ENCODE measurements at regions of chr5 and their contacts with region 1.

Region 1: DNA sequence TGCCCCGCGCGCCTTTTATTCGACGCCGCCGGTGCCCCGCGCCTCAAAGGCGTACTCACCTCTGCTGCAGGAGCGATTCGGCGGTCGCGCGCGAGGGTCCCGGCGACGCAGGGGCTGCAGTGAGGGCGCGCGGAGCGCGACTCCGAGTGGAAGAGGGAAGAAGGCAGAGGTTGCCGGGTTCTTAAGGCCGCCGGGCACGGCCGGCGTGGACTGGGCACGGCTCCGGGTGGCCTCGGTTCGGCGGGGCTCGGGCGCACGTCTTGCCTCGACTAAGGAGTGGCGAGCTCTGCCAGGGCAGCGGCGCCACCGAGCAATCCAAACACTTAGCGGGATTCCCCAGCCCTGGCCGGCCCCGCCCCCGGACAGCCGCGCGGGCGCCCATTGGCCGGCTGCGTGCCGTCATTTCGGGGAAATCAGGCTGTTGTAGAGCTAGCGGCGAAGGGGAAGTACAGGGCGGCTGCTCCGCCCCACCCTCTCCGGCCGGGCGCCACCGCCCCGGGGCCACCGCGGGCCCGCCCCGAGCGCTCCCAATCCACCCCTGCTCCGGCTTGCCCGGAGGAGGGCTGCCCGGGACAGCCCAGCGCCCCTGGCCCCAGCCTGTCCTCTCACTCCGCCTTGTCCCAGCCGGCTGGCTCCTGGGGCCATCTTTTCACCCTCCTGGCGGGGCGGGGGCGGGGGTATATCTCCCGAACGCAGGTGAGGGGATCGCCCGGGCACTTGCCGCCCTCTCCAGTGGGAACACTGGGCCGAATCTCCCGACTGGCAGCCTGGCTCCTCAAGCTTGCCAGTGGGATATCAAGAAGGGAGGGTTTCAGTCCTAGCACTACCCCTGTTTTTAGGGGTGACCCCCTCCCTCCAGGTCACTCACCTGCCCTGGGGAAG is at the start of gene IRF1:
- DNase-seq: peak; percentile 97 to 100 (median 99)
- ATAC-seq: peak; percentile 89
- H3K4me3 ChIP-seq: peak within 1 kb of the TSS; percentile 78
- H3K4me3 Mint-ChIP-seq: peak within 1 kb of the TSS; percentile 92 to 98 (median 95)
- H3K27ac ChIP-seq: peak within 1 kb of the TSS; percentile 99
- H3K27ac Mint-ChIP-seq: peak within 1 kb of the TSS; percentile 93 to 99 (median 96)
- H3K4me1 ChIP-seq: peaks cover 59 to 65% of the 10 kb centered on the region in 2 donors
- H3K4me1 Mint-ChIP-seq: peaks cover 52 to 78% (median 71%) of the 10 kb centered on the region in 7 donors
- H3K27me3 ChIP-seq: no peaks in the 10 kb centered on the region
- H3K27me3 Mint-ChIP-seq: peaks cover 0 to 2% (median 0%) of the 10 kb centered on the region in 5 donors
- total RNA-seq, gene IRF1: 118 to 632 (median 549) TPM

Region 2: DNA sequence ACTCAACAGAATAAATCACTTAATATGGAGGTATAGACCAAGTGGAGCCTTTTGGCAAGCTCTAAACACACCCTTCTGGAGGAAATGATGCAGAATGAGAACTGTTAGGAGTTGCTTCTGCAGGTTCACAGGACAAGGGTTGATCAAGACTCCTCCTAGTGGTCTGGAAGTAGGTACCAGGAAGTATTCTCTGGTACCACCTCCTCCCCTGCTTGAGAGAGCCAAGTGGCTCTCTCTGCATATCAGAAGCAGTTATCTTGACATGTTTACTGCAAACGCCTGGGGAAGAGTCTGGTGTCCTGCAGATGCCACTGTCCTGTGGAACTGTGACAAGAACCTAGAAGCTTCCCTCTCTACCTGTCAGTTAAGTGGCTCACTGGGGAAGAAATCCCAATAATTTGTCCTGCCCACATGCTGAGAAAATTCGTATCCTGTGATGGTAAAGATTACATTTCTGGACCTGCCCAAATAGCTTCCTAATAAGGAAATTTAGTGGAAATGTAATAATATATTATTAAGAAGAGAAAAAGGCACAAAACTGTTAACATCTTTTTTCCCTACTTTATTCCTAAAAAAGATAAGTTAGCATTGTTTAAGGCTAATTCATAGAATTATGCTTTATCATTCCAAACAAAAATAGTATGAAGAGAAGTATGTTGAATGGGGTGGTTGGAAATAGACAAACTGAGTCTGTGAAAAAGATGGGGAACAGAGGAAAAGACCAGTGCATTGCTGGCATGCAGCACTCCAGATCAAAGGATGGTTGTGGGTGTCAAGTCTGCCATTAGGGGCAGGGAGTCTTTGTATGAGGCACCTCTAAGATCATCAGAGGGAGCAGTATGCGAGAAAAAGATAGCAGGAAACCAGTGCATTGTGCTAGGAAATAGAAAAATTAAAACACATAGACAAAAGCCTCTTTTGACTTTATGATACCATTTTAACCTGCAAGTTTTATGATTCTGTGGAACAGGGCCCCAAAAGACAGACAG is 1108.0 kb before region 1 on chr5:
- CTCF ChIA-PET with region 1: no interaction called
- POLR2A ChIA-PET with region 1: no interaction called
- intact Hi-C with region 1: loop called in 1 of 2 experiments (anchors 10 kb)
- DNase-seq: peak in 8 of 9 donors; percentile 43 to 88 (median 82)
- ATAC-seq: peak; percentile 81
- H3K4me3 ChIP-seq: no peak overlapping the region
- H3K4me3 Mint-ChIP-seq: peak overlapping the region; percentile 40 to 86 (median 72)
- H3K27ac ChIP-seq: peak overlapping the region; percentile 97
- H3K27ac Mint-ChIP-seq: peak overlapping the region; percentile 94 to 99 (median 98)
- H3K4me1 ChIP-seq: peaks cover 74 to 76% of the 10 kb centered on the region in 2 donors
- H3K4me1 Mint-ChIP-seq: peaks cover 41 to 100% (median 92%) of the 10 kb centered on the region in 7 donors
- H3K27me3 ChIP-seq: no peaks in the 10 kb centered on the region
- H3K27me3 Mint-ChIP-seq: no peaks in the 10 kb centered on the region

Region 3: GRCh38 chr5:132394667-132395259 is 96.0 kb before region 1 on chr5:
- CTCF ChIA-PET with region 1: interaction called, 243 read pairs
- POLR2A ChIA-PET with region 1: interaction called, 122 read pairs
- intact Hi-C with region 1: no loop called
- DNase-seq: no peak
- ATAC-seq: no peak
- H3K4me3 ChIP-seq: no peak overlapping the region
- H3K4me3 Mint-ChIP-seq: peak overlapping the region in 6 of 10 donors; percentile 6 to 73 (median 34)
- H3K27ac ChIP-seq: peak overlapping the region; percentile 35
- H3K27ac Mint-ChIP-seq: peak overlapping the region in 8 of 9 donors; percentile 68 to 94 (median 87)
- H3K4me1 ChIP-seq: peaks cover 19 to 65% of the 10 kb centered on the region in 2 donors
- H3K4me1 Mint-ChIP-seq: peaks cover 48 to 94% (median 82%) of the 10 kb centered on the region in 7 donors
- H3K27me3 ChIP-seq: no peaks in the 10 kb centered on the region
- H3K27me3 Mint-ChIP-seq: peaks cover 0 to 10% (median 0%) of the 10 kb centered on the region in 5 donors

Region 4: DNA sequence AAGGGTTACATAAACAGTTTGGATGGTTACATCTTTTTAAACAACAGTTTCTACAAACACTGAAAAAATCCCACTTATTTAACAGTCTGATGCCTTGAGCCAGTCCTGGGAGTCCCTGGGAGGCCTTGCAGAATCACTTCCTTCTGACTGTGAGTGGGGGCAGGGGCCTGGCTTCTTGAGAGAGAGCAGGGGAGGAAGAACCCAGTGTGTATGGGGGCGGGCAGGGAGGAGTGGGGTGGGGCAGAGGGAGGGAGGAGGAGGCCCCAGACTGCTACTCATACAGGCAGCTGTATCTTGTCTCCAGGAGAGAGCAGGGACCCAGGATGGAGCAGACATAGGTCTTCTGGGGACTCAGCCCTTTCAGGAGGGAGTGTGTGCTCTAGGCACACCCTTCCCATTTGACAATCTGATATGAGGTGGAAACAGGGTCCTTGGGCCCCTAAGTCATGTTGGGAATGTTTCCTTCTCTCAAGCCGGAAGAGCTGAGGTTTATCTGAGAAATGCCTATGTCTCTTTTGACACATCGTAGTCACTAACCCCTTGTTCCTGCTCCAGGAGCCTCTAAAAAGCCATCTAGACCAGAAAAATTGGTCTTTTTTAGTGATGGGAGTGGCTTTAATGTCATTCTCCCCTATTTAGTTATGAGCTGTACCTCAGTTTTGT is 53.0 kb before region 1 on chr5:
- CTCF ChIA-PET with region 1: interaction called, 14 read pairs
- POLR2A ChIA-PET with region 1: interaction called, 62 read pairs
- intact Hi-C with region 1: no loop called
- DNase-seq: peak in 8 of 9 donors; percentile 36 to 66 (median 56)
- ATAC-seq: peak; percentile 88
- H3K4me3 ChIP-seq: peak overlapping the region; percentile 25
- H3K4me3 Mint-ChIP-seq: peak overlapping the region; percentile 60 to 79 (median 68)
- H3K27ac ChIP-seq: peak overlapping the region; percentile 67
- H3K27ac Mint-ChIP-seq: peak overlapping the region; percentile 79 to 93 (median 85)
- H3K4me1 ChIP-seq: peaks cover 61 to 86% of the 10 kb centered on the region in 2 donors
- H3K4me1 Mint-ChIP-seq: peaks cover 68 to 96% (median 83%) of the 10 kb centered on the region in 7 donors
- H3K27me3 ChIP-seq: no peaks in the 10 kb centered on the region
- H3K27me3 Mint-ChIP-seq: no peaks in the 10 kb centered on the region

Region 5: GRCh38 chr5:132479111-132479951 is 11.4 kb before region 1 on chr5:
- CTCF ChIA-PET with region 1: interaction called, 46 read pairs
- POLR2A ChIA-PET with region 1: interaction called, 129 read pairs
- intact Hi-C with region 1: loop called in 1 of 2 experiments (anchors 1 kb)
- DNase-seq: peak in 3 of 9 donors; percentile 12 to 31 (median 29)
- ATAC-seq: no peak
- H3K4me3 ChIP-seq: no peak overlapping the region
- H3K4me3 Mint-ChIP-seq: peak overlapping the region in 4 of 10 donors; percentile 13 to 42 (median 22)
- H3K27ac ChIP-seq: peak overlapping the region; percentile 47
- H3K27ac Mint-ChIP-seq: peak overlapping the region; percentile 85 to 97 (median 92)
- H3K4me1 ChIP-seq: peaks cover 10 to 84% of the 10 kb centered on the region in 2 donors
- H3K4me1 Mint-ChIP-seq: peaks cover 33 to 78% (median 70%) of the 10 kb centered on the region in 7 donors
- H3K27me3 ChIP-seq: no peaks in the 10 kb centered on the region
- H3K27me3 Mint-ChIP-seq: no peaks in the 10 kb centered on the region

Region 6: DNA sequence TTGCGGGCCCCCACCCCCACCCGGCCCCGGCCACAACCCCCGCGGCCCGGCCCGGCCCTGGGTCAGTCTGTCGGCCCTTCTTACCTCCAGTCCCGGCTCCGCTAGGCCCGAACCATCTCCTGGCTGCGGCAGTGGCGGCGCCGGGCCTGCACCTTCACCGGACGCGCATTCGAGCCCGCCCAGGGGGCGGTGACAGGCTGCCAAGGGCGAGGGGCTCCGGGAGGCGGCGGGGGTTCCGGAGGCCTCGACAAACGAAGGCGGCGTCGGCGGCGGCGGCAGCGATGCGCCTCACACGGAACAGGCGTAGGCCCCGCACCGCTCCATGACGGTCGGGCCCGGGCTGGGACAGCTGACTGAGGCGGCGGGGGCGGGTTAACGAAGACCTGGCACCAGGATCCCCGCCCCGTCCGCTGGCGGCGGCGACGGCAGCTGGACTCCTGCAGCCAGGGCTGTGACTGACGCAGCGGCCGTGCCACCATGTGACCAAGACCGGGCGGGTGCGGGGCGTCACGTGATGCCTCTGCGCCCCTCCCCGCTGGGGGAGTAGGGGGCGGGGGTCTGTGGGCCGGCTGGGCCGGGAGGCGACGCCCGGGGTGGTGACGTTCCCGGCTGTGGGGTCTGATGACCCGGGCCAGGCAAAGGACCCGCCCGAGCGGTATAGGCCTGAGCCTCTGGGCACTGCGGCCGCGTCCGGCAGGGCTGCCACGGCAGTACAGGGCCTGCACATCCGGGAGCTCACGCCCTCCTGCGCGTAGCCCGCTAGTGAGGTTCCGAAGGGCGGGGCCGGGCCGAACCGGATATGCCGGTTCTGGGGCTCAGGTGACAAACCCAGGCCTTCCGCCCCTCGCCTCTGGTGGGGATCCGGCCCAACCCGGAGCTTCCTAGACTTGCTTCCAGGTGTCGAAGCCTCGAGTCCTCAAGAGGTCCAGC is 472.7 kb after region 1 on chr5 and contains the start of gene AFF4:
- CTCF ChIA-PET with region 1: no interaction called
- POLR2A ChIA-PET with region 1: interaction called, 3 read pairs
- intact Hi-C with region 1: loop called in 1 of 2 experiments (anchors 5 kb)
- DNase-seq: peak; percentile 81 to 90 (median 85)
- ATAC-seq: peak; percentile 92
- H3K4me3 ChIP-seq: peak within 1 kb of the TSS; percentile 65
- H3K4me3 Mint-ChIP-seq: peak within 1 kb of the TSS; percentile 90 to 100 (median 98)
- H3K27ac ChIP-seq: peak within 1 kb of the TSS; percentile 94
- H3K27ac Mint-ChIP-seq: peak within 1 kb of the TSS; percentile 96 to 100 (median 98)
- H3K4me1 ChIP-seq: peaks cover 10 to 22% of the 10 kb centered on the region in 2 donors
- H3K4me1 Mint-ChIP-seq: peaks cover 26 to 52% (median 38%) of the 10 kb centered on the region in 7 donors
- H3K27me3 ChIP-seq: no peaks in the 10 kb centered on the region
- H3K27me3 Mint-ChIP-seq: no peaks in the 10 kb centered on the region
- total RNA-seq, gene AFF4: 39.7 to 82.3 (median 69.0) TPM